Activated CD8-positive, alpha-beta memory T cell treated with anti-CD3 and anti-CD28 coated beads, Interleukin-2, amount 10 ng/mL, durations not matched to agents 7 days and 5 days (primary cell): ENCODE measurements at regions of chr1 and their contacts with region 1.

Region 1: GRCh38 chr1:100352267-100353070 is at the start of gene CDC14A:
- DNase-seq: peak; percentile 95
- ATAC-seq: peak; percentile 69
- H3K4me3 Mint-ChIP-seq: peak within 1 kb of the TSS; percentile 93
- H3K27ac Mint-ChIP-seq: peak within 1 kb of the TSS; percentile 98
- H3K4me1 Mint-ChIP-seq: peaks cover 35% of the 10 kb centered on the region
- H3K27me3 Mint-ChIP-seq: no peaks in the 10 kb centered on the region
- total RNA-seq, gene CDC14A: 34.2 to 43.1 TPM

Region 2: DNA sequence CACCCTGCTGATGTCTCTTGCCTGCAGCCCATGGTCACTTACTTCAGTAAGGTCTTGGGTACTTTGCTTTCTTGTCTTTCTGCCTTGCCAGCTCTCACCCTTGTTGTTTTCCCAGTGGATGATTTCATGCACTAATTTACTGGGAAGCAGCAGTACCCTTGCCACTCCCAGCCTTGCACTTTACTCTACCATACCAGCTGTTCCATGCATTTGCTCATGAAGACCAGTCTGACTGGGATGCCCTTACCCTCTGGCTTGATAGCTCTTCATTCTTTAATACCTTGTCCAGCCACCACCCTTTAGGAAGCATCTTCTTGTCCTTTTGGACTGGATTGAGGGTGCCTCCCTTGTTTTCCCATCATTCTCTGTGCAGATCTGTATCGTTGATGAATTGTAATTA is 28.2 kb after region 1 on chr1:
- CTCF ChIA-PET with region 1: interaction called, 10 read pairs
- DNase-seq: no peak
- ATAC-seq: no peak
- H3K4me3 Mint-ChIP-seq: no peak overlapping the region
- H3K27ac Mint-ChIP-seq: no peak overlapping the region
- H3K4me1 Mint-ChIP-seq: peaks cover 39% of the 10 kb centered on the region
- H3K27me3 Mint-ChIP-seq: no peaks in the 10 kb centered on the region

Region 3: DNA sequence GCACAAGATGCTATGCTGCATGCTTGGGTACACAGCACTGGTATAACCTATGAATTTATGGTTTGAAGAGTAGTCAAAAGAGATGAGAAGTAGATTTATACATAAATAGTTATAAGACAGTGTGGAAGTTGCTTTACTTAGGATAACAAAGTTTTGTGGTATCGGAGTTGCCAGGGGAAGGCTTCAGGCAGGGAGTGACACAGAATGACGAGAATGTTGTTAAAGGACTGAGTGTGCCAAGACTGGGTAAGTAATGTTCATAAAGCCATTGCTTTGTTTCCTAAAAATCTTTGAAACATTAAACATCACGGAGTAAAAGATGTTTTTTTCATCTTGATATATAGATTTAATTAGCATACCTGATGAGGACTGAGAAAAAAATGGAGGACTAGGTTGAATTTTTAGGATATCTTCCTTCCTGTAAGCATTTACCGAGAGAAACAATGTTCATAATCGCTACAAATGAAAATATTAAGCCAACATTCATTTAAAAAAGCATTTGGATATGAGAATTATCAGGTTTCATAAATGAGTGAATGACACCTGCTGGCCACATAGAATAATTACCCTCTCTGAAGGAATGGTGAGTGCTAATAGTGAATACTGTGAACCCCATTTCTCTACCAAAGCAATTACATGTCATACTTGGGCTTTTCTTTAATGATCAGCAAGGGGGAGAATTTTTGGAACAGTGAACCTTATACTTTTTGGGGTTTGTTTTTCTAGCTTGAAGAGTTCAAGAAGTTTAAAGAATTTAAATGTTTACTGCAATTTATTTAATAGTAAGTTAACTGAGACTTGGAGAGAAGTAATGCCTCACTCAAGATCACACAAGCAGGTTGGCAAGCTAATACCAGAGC is 513.8 kb after region 1 on chr1:
- CTCF ChIA-PET with region 1: interaction called, 10 read pairs
- DNase-seq: no peak
- ATAC-seq: peak; percentile 63
- H3K4me3 Mint-ChIP-seq: no peak overlapping the region
- H3K27ac Mint-ChIP-seq: no peak overlapping the region
- H3K4me1 Mint-ChIP-seq: peaks cover 3% of the 10 kb centered on the region
- H3K27me3 Mint-ChIP-seq: no peaks in the 10 kb centered on the region